ENCODE measurements at regions of chr4 and their contacts with region 1.

Region 1: GRCh38 chr4:47463235-47463956 is at the start of gene COMMD8:
- DNase-seq: peak; percentile 87 to 89
- ATAC-seq: peak; percentile 97 to 98
- H3K4me3 ChIP-seq: peak within 1 kb of the TSS; percentile 74 to 88 (median 85)
- H3K27ac ChIP-seq: peak within 1 kb of the TSS; percentile 65 to 81 (median 76)
- H3K4me1 ChIP-seq: peaks cover 0 to 12% of the 10 kb centered on the region in 2 donors
- H3K27me3 ChIP-seq: no peaks in the 10 kb centered on the region
- CTCF ChIP-seq: peak in 4 of 5 experiments; percentile 38 to 47 (median 42)
- POLR2A ChIP-seq: peak in 1 of 2 donors; percentile 6
- total RNA-seq, gene COMMD8: 4.8 to 8.5 (median 6.4) TPM

Region 2: GRCh38 chr4:47415719-47416118 is 47.7 kb before region 1 on chr4:
- in situ Hi-C with region 1: no loop called
- intact Hi-C with region 1: no loop called
- DNase-seq: no peak
- ATAC-seq: no peak
- H3K4me3 ChIP-seq: no peak overlapping the region
- H3K27ac ChIP-seq: no peak overlapping the region
- H3K4me1 ChIP-seq: no peaks in the 10 kb centered on the region
- H3K27me3 ChIP-seq: no peaks in the 10 kb centered on the region
- CTCF ChIP-seq: no peak
- POLR2A ChIP-seq: no peak

Region 3: DNA sequence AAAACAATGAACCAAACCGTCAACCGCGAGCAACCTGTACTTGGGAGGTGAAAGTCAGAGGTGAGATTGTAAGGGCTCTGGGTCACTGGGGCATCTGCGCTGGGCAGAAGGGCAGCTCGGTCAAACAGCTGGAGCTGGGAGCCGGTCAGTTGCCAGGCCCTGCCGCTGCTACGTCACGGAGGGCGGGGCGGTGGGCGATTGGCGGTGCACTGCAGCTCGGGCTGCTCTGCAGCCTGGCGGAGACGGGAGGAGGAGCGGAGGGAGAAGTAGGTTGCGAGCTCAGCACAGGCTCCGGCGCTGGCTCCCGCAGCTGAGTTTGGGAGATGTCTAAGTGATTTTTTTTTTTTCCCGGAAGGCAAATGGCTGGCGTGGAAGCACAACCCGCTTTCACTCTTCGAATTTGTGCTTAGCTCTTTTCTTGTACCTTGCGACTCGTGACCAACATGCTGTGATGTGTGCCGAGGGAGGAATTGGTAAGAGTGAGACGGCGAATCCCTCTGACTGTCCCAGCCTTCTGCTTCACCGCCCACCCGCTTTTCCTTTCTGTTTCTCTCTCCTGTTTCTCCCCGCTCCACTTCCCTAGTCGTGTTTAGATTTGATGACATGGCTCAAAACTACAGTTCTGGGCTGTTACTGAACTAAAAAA is 21.8 kb after region 1 on chr4 and contains the start of gene ATP10D:
- in situ Hi-C with region 1: no loop called
- intact Hi-C with region 1: loop called (anchors 1 kb)
- DNase-seq: peak; percentile 82 to 86
- ATAC-seq: peak; percentile 97
- H3K4me3 ChIP-seq: peak within 1 kb of the TSS; percentile 62 to 73 (median 68)
- H3K27ac ChIP-seq: peak within 1 kb of the TSS; percentile 81 to 83 (median 82)
- H3K4me1 ChIP-seq: peaks cover 0 to 5% of the 10 kb centered on the region in 2 donors
- H3K27me3 ChIP-seq: no peaks in the 10 kb centered on the region
- CTCF ChIP-seq: peak in 2 of 5 experiments; percentile 31 to 36
- POLR2A ChIP-seq: peak; percentile 60 to 78
- total RNA-seq, gene ATP10D: 1.5 to 3.2 (median 2.8) TPM

Region 4: DNA sequence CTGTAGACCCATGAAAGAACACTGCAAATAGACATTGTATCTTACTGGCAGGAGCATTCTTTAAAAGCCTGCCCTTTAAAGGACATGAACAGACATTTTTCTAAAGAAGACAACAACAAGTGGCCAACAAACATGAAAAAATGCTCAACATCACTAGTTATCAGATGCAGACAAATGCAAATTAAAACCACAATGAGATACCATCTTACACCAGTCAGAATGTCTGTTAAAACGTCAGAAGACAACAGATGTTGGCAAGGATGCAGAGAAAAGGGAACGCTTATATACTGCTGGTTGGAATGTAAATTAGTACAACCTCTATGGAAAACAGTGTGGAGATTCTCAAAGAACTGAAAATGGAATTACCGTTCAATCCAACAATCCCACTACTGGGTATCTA is 98.9 kb after region 1 on chr4:
- in situ Hi-C with region 1: no loop called
- intact Hi-C with region 1: loop called (anchors 10 kb)
- DNase-seq: no peak
- ATAC-seq: no peak
- H3K4me3 ChIP-seq: no peak overlapping the region
- H3K27ac ChIP-seq: no peak overlapping the region
- H3K4me1 ChIP-seq: no peaks in the 10 kb centered on the region
- H3K27me3 ChIP-seq: no peaks in the 10 kb centered on the region
- CTCF ChIP-seq: no peak
- POLR2A ChIP-seq: no peak